ENCODE measurements at regions of chr17 and their contacts with region 1.

Region 1: DNA sequence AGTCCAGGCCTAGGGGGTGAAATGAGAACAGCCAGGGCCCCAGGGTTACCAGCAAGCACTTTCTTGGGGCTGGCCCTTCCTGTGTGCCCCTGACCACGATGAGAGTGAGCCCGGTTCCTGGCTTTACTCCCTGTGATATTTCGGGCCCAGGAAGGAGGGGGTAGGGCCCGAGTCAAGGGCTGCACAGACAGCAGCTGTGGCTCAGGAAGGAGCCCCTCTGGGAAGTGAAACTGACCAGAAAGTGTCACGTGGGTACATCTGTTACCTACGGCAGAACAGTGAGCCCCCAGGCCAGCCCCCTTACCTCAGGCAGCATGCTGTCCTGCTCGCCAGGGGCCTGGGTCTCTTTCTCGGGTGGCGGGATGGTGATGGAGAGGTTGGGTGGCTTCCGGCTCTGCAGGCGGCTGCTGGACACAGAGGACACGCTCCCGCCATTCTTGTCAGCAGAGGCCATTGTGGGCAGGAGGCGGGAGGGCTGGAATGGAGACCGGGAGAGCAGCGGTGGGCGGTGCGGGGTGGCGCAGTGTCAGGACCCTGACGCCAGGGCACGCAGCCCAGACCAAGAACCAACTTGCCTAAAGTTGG is 13.8 kb downstream of the AANAT start:
- DNase-seq: peak; percentile 98
- H3K4me3 ChIP-seq: peak overlapping the region; percentile 67
- H3K27ac ChIP-seq: peak overlapping the region; percentile 95
- H3K4me1 ChIP-seq: peaks cover 84% of the 10 kb centered on the region
- CTCF ChIP-seq: no peak

Region 2: DNA sequence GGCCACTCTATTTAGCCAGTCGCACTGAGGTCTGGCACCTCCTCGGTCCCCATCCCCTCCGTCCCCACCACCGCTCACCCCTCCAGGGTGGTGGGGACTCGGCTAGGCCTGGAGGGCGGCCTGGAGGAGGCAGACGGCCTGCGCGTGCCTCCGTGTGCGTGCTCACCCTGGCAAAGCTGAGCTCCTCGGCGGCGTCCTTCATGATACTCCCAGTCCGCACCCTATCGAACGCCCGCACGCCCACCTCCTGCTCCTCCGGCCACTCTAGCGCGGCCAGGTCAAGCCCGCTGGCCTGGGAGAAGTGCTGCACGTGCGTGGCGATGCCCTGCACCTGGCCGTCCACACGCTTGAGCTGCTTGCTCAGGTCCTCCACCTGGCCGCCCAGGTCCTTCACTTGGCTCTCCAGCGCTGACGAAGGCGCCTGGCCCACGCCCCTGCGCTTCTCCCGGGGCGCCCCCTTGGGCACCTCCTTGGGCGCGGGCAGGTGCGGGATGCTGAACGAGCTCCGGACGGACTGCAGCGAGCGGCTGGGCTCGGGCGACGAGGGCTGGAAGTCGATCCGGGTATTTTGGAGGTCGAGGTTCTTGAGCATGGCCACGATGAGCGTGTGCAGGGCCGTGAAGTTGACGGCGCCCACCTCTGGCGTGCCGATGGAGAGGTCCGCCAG is 173.7 kb before region 1 on chr17:
- CTCF ChIA-PET with region 1: no interaction called
- POLR2A ChIA-PET with region 1: no interaction called
- intact Hi-C with region 1: no loop called
- DNase-seq: no peak
- H3K4me3 ChIP-seq: no peak overlapping the region
- H3K27ac ChIP-seq: no peak overlapping the region
- H3K4me1 ChIP-seq: peaks cover 12% of the 10 kb centered on the region
- CTCF ChIP-seq: no peak

Region 3: GRCh38 chr17:76427501-76428231 is 53.5 kb before region 1 on chr17:
- CTCF ChIA-PET with region 1: no interaction called
- POLR2A ChIA-PET with region 1: interaction called, 6 read pairs
- intact Hi-C with region 1: loop called (anchors 2 kb)
- DNase-seq: peak; percentile 90
- H3K4me3 ChIP-seq: peak overlapping the region; percentile 59
- H3K27ac ChIP-seq: peak overlapping the region; percentile 92
- H3K4me1 ChIP-seq: peaks cover 95% of the 10 kb centered on the region
- CTCF ChIP-seq: no peak

Region 4: DNA sequence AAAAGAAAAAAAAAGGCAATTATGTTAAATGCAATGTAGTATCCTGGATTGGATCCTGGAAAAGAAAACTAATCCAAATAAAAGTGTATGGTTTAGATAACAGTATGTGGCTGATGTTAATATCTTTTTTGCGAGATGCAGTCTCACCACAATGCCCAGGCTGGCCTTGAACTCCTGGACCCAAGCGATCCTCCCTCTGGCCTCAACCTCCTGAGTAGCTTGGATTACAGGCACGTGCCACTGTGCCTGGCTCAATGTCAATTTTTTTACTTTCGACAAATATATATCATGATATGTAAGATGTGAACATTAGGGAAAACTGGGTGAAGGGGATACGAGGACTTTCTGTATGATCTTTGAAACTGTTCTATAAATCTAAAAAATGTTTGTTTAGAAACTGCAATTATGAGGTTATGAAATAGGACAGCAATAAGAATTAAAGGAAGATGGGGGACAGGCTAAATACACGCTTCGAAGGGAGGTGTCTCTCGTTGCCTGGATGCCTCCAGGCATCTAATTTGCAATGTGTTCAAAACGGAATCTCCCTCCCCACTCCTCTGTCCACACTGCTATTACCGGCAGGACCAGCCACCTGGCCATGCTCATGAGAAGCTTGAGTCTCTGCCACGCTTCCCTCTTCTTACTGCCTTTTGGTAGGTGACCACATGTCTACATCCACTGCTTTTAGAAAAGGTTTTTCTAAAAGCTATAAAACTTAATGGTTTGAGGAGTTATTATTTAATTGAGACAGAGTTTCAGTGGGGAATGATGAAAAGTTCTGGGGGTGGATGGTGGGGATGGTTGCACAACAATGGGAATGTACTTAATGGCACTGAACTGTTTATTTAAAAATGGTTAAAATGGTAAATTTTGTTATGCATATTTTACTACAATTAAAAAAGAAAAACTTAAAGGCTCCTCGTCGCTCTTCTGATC is 43.4 kb before region 1 on chr17:
- CTCF ChIA-PET with region 1: no interaction called
- POLR2A ChIA-PET with region 1: no interaction called
- intact Hi-C with region 1: no loop called
- DNase-seq: no peak
- H3K4me3 ChIP-seq: no peak overlapping the region
- H3K27ac ChIP-seq: no peak overlapping the region
- H3K4me1 ChIP-seq: peaks cover 84% of the 10 kb centered on the region
- CTCF ChIP-seq: no peak

Region 5: DNA sequence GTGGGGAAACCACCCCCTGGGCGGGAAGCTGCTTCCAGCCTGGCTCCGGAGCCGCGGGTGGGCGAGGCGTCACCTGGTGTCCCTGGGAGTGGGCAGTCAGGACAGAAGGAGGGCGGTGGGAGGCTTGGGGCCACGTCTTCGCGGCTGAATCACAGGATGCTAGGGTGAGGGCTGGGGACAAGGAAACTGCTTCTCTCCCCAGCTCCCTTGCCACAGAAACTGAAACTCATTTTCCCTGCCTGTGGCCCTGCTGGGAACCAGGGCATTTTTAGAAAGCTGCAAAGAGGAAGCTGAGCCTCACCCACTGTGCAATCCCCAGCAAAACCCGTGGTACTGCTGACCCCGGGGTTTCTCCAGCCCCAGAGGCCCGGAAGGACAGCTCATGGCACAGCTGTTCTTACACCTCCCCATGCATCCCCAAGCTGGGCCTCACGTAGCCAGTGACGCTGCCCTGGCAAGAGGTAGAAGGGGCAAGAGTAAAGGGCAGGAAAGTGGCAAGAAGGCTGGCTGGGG is 11.9 kb after region 1 on chr17:
- CTCF ChIA-PET with region 1: interaction called, 15 read pairs
- POLR2A ChIA-PET with region 1: interaction called, 57 read pairs
- intact Hi-C with region 1: loop called (anchors 1 kb)
- DNase-seq: peak; percentile 81
- H3K4me3 ChIP-seq: peak overlapping the region; percentile 41
- H3K27ac ChIP-seq: peak overlapping the region; percentile 83
- H3K4me1 ChIP-seq: peaks cover 85% of the 10 kb centered on the region
- CTCF ChIP-seq: no peak

Region 6: DNA sequence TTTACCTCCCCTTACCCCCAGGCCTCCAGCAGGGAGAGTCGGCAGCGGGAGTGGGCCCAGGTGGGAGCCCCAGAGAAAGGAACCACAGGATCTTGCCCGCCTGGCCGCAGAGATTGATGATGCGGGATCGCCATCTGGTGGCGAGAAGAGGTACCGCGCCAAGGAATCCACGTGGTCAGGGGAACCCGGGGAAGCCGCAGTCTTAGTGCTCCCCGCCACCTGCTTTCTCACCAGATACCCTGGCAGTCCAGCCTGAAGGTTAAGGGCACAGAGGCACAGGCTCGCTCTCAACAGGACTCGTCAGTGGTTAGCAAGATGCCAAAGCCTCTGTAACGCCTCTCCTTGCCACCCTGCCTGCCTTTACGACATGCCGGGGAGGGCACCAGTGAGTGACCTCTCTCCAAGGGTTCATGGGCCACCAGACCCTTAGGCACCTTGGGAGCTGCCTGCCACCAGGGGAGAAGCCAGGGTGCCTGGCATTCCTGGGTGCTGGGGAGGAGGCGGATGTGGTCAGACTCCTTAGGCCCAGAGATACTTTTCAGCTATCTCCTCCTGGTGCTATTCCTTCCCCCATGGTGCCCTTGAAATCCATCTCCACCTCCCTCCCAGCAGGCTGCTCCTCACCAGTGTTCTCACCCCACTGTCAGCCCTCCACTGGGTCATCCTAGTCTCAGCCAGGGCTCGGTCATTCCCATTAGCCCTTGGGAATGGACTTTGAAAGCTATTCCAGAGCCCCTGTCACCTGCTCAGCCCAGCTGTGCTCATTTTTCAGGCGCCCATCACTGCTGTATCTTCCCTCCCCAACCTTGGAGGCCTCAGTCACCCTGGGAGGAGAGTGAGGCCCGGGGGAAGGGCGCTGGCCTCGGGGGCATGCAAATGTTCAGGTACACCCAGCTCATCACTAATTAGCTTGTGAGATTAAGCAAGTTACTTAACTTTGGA is 25.5 kb after region 1 on chr17:
- CTCF ChIA-PET with region 1: interaction called, 8 read pairs
- POLR2A ChIA-PET with region 1: interaction called, 57 read pairs
- intact Hi-C with region 1: loop called (anchors 1 kb)
- DNase-seq: peak; percentile 90
- H3K4me3 ChIP-seq: no peak overlapping the region
- H3K27ac ChIP-seq: peak overlapping the region; percentile 31
- H3K4me1 ChIP-seq: peaks cover 48% of the 10 kb centered on the region
- CTCF ChIP-seq: peak; percentile 100

Region 7: GRCh38 chr17:78133971-78134898 is 1653.1 kb after region 1 on chr17:
- CTCF ChIA-PET with region 1: no interaction called
- POLR2A ChIA-PET with region 1: no interaction called
- intact Hi-C with region 1: loop called (anchors 5 kb)
- DNase-seq: peak; percentile 91
- H3K4me3 ChIP-seq: peak overlapping the region; percentile 81
- H3K27ac ChIP-seq: peak overlapping the region; percentile 91
- H3K4me1 ChIP-seq: peaks cover 54% of the 10 kb centered on the region
- CTCF ChIP-seq: peak; percentile 97